Heart right ventricle (tissue), 16 donors: ENCODE measurements at regions of chr1 and their contacts with region 1.

Region 1: GRCh38 chr1:53196485-53197270 is at the start of gene CPT2:
- DNase-seq: peak; percentile 93 to 96
- ATAC-seq: peak; percentile 97 to 99 (median 98)
- H3K4me3 ChIP-seq: peak within 1 kb of the TSS; percentile 64 to 95 (median 88)
- H3K27ac ChIP-seq: peak within 1 kb of the TSS; percentile 86 to 99 (median 98)
- H3K4me1 ChIP-seq: peaks cover 3 to 41% (median 34%) of the 10 kb centered on the region in 9 donors
- H3K27me3 ChIP-seq: no peaks in the 10 kb centered on the region
- CTCF ChIP-seq: peak in 3 of 9 donors; percentile 16 to 35 (median 27)
- total RNA-seq, gene CPT2: 29.3 to 48.7 (median 37.5) TPM

Region 2: DNA sequence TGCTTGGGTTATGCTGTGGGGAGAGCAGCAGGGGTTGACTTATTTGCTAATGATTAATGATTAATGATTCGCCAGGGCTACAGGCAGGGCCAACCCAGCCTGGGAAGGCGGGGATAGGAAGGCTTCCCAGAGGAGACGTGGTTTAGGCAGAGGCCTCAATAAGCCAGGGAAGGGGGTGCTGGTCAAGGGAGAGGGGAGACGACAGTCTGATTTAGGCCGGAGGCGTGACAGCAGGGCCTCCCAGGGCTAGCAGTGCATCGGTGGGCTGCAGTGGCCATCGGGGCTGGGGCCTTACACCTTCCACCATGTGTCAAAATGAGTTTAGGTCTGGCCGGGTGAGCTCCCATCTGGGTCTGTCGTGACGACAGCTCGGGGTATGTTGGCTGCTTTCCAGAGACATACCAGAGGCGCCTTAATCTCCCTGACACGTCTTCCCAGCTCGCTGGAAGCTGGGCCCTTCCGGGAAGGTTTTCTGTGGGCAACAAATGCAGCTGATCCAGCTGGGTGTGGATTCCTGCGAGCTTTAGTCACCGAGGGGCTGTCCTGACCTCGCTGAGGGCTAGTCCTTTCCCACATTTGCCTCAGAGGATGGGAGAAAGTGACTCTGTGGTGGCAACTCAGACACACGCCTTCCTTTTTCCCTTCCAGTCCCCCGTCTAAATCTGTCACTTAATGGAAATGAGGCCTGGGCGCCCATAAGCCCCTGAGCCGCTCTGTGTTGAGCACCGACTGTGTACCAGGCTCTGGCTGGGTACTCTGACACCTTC is 50.6 kb before region 1 on chr1:
- intact Hi-C with region 1: no loop called
- DNase-seq: peak; percentile 30 to 41
- ATAC-seq: peak; percentile 53 to 93 (median 65)
- H3K4me3 ChIP-seq: no peak overlapping the region
- H3K27ac ChIP-seq: peak overlapping the region in 7 of 10 donors; percentile 27 to 81 (median 51)
- H3K4me1 ChIP-seq: peaks cover 0 to 52% (median 10%) of the 10 kb centered on the region in 9 donors
- H3K27me3 ChIP-seq: no peaks in the 10 kb centered on the region
- CTCF ChIP-seq: no peak

Region 3: GRCh38 chr1:53220171-53220961 is 23.7 kb after region 1 on chr1 and contains the start of gene CZIB:
- intact Hi-C with region 1: loop called in 2 of 10 experiments (anchors 1 to 2 kb)
- DNase-seq: peak; percentile 95 to 96
- ATAC-seq: peak; percentile 97 to 99 (median 99)
- H3K4me3 ChIP-seq: peak within 1 kb of the TSS; percentile 60 to 95 (median 85)
- H3K27ac ChIP-seq: peak within 1 kb of the TSS; percentile 89 to 98 (median 95)
- H3K4me1 ChIP-seq: peaks cover 7 to 19% (median 16%) of the 10 kb centered on the region in 9 donors
- H3K27me3 ChIP-seq: no peaks in the 10 kb centered on the region
- CTCF ChIP-seq: no peak
- total RNA-seq, gene CZIB: 41.8 to 54.6 (median 48.4) TPM

Region 4: DNA sequence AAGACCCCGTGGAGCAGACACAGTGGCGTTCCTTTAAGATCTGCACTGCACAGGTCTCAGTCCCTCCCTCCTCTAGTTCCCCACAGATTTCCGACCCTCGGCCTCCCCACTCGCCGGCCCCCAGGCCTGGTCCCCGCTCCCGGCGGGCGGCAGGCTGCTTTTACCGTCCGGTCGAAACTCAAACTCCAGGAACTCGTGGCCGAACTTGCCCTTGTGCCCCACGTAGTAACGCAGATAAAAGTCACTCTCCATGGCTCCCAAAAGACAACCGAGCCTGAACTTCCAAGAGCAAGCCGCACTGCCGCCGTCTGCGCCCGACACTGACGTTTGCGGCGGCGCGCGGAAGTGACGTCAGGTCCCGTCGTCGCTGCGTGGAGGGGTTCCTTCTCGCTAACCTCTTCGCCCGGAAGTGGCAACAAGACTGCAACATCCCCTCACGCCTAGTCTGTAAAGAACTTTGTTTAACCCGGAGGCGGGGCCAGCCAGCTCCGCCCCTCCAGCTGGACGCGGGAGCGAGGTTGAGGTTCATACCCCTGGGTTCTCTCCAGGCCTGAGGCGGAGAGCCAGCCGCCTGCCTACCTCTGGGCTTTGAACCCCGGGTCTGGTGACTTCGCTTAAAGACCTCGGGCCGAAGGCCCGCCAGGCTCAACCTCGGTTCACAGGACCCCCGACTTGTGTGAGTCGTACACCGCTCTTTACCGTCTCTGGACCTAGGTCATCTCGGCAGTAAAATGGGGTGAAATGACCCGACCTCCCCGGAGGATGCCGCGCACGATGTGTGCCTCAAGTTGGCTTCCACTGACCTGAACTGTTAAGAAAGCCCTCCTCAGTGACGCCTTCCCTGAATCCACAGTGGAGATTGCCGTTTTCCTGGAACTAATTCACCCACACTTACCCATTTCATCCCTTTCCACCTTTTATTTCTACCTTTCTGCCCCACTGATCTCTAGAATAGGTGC is 41.8 kb after region 1 on chr1 and contains the start of gene MAGOH:
- intact Hi-C with region 1: loop called in 1 of 10 experiments (anchors 2 kb)
- DNase-seq: peak; percentile 93 to 94
- ATAC-seq: peak; percentile 96 to 99 (median 98)
- H3K4me3 ChIP-seq: peak within 1 kb of the TSS; percentile 74 to 96 (median 86)
- H3K27ac ChIP-seq: peak within 1 kb of the TSS in 9 of 10 donors; percentile 43 to 90 (median 74)
- H3K4me1 ChIP-seq: peaks cover 4 to 33% (median 24%) of the 10 kb centered on the region in 9 donors
- H3K27me3 ChIP-seq: no peaks in the 10 kb centered on the region
- CTCF ChIP-seq: no peak
- total RNA-seq, gene MAGOH: 17.3 to 31.5 (median 22.6) TPM